ENCODE measurements at regions of chr22 and their contacts with region 1.

Region 1: DNA sequence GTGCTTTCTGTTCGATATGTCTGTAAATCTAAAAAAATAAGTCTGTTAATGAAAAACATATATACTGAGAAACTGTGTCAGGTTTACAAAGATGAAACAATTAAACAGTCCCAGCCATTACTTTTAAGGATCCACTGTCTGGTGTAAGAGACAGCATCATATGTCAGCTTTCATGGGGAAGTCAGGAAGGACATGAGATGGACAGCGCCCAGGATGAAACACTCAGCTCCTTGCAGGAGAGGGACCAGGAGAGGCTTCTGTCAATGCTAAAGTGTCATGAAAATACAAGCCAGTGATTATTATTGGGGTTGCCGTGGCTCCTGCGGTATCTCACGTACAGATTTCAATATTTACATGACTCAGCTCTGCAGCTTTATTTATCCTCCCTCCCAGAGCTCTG is 1524.6 kb downstream of the TBC1D22A start:
- DNase-seq: no peak
- H3K4me3 ChIP-seq: no peak overlapping the region
- H3K27ac ChIP-seq: no peak overlapping the region
- H3K4me1 ChIP-seq: peaks cover 0 to 13% (median 2%) of the 10 kb centered on the region in 4 donors
- H3K27me3 ChIP-seq: peaks cover 0 to 8% (median 0%) of the 10 kb centered on the region in 3 donors
- CTCF ChIP-seq: no peak
- EP300 ChIP-seq: no peak
- POLR2A ChIP-seq: no peak

Region 2: GRCh38 chr22:47110791-47111443 is 1176.1 kb before region 1 on chr22:
- intact Hi-C with region 1: loop called (anchors 10 kb)
- DNase-seq: no peak
- H3K4me3 ChIP-seq: no peak overlapping the region
- H3K27ac ChIP-seq: no peak overlapping the region
- H3K4me1 ChIP-seq: no peaks in the 10 kb centered on the region
- H3K27me3 ChIP-seq: no peaks in the 10 kb centered on the region
- CTCF ChIP-seq: no peak
- EP300 ChIP-seq: no peak
- POLR2A ChIP-seq: no peak

Region 3: GRCh38 chr22:47281126-47282106 is 1005.6 kb before region 1 on chr22:
- intact Hi-C with region 1: loop called (anchors 10 kb)
- DNase-seq: no peak
- H3K4me3 ChIP-seq: no peak overlapping the region
- H3K27ac ChIP-seq: no peak overlapping the region
- H3K4me1 ChIP-seq: no peaks in the 10 kb centered on the region
- H3K27me3 ChIP-seq: peaks cover 0 to 22% (median 6%) of the 10 kb centered on the region in 3 donors
- CTCF ChIP-seq: no peak
- EP300 ChIP-seq: no peak
- POLR2A ChIP-seq: no peak

Region 4: DNA sequence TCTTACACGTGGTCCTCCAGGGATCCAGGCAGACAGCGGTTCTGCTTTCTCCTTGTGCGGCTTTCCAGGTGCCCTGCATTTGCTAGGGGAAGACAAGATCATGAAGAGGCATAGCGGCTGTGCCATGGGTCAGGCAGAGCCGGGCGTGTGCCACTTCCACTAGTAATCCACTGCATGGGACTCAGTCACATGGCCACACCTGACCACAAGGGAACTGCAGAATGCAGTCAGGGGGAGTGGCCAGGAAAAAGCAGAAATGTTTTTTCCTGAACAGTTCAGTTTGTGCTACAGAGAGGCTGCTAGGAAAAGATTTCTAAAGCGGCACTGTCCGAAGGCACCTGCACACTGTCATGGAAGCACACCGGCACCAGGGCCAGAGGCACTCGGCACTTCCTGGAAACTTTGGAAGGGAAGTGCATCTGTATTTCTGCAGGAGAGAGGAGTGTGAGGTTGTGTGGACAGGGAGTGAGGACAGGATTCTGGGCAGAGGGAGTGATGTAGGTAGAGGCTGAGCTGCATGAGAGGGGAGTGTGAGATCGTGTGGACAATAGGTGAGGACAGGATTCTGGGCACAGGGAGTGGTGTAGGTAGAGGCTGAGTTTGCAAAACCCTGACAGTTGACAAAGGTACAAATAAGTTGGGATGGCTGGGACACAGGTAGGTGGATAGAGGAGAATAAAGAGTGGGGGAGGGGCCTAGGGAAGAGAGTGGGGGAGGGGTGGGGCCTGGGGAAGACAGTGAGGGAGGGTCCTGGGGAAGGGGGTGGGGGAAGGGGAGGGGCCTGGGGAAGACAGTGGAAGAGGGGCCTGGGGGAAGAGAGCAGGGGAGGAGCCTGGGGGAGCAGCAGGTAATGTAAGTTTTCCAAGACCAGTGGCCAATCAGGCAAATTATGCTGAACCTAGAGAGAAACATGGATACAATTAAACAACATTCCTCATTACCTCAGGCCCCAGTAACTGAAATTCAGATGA is 88.3 kb before region 1 on chr22:
- intact Hi-C with region 1: no loop called
- DNase-seq: no peak
- H3K4me3 ChIP-seq: no peak overlapping the region
- H3K27ac ChIP-seq: no peak overlapping the region
- H3K4me1 ChIP-seq: no peaks in the 10 kb centered on the region
- H3K27me3 ChIP-seq: peaks cover 0 to 23% (median 0%) of the 10 kb centered on the region in 3 donors
- CTCF ChIP-seq: no peak
- EP300 ChIP-seq: no peak
- POLR2A ChIP-seq: no peak

Region 5: DNA sequence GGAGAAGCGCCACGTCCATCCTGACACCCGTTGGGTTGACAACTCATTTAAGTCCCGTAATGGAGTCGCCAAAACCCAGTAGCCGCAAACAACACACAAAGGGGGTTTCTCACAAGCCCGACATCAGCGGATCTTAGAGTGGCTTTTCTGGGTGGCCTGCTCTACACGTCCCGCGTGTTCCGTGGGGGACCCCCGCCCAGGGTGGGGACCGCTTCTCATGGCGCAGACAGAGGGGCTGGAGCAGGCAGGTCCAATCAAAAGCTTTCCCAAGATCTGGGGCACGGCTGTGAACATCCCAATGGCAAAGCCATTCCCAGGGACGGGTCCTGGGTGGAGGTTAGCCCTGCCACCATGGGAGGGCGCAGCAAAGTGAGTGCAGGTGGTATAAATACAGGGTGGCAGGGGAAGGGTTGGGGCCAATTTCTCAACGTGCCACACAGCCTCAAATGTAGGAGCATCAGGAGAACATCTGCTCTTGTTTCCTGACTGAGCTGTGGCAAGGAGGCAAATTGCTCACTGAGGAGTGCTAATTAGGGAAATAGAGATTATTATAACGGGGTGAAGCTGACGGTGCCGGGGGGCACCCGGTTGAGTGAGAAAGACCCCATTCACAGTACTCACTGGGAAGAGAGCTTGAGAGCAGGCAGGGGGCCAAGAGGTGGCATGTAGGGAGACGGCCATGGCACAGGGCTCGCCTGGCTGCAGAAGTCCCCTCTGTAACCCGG is 77.4 kb before region 1 on chr22:
- intact Hi-C with region 1: no loop called
- DNase-seq: no peak
- H3K4me3 ChIP-seq: no peak overlapping the region
- H3K27ac ChIP-seq: no peak overlapping the region
- H3K4me1 ChIP-seq: no peaks in the 10 kb centered on the region
- H3K27me3 ChIP-seq: peaks cover 0 to 30% (median 0%) of the 10 kb centered on the region in 3 donors
- CTCF ChIP-seq: no peak
- EP300 ChIP-seq: no peak
- POLR2A ChIP-seq: no peak

Measured in sigmoid colon (tissue), 7 donors.